ENCODE measurements at regions of chr12 and their contacts with region 1.

Region 1: DNA sequence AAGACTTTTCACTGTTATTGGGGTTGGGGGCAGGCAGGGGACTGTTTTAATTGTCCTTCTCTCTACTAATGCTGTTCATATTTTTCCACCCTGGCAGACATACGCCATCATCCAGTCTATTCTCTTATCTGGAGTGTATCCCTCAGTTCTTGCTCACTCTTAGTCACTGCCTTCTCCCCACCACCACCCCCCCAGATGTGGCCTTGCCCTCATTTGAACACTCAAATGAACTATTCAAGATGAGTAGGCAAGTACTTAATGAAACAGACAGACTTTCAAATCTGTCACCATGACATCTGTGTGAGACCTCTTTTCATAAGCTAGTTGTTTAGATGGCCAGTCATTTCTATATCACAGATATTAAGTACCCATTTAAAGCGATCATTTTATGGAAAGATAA is 10.1 kb downstream of the NUDT4 start:
- DNase-seq: no peak
- ATAC-seq: peak in 3 of 4 donors; percentile 15 to 59 (median 46)
- H3K4me3 ChIP-seq: no peak overlapping the region
- H3K27ac ChIP-seq: peak overlapping the region in 4 of 12 donors; percentile 3 to 45 (median 25)
- H3K4me1 ChIP-seq: peaks cover 0 to 80% (median 57%) of the 10 kb centered on the region in 12 donors
- H3K27me3 ChIP-seq: no peaks in the 10 kb centered on the region
- CTCF ChIP-seq: no peak
- POLR2A ChIP-seq: no peak

Region 2: DNA sequence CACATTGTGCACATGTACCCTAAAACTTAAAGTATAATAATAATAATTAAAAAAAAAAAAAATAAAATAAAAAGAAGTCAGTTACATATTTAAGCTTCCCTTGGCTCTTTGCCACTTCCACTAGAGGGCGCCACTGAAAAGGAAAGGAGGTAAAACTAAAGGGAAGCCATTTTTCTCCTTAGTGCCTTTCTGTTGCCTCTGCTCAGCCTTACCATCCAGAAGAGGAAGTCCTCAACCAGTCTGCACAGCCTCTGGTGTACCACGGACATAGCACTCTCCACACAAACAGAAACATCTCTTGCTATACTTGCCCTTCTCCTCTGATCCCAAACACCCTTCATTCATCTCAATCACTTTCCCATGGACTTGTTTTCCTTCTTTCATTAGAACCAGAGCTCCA is 289.7 kb before region 1 on chr12:
- intact Hi-C with region 1: loop called in 1 of 10 experiments (anchors 10 kb)
- DNase-seq: peak in 4 of 5 donors; percentile 33 to 50 (median 40)
- ATAC-seq: peak in 2 of 4 donors; percentile 34 to 72
- H3K4me3 ChIP-seq: no peak overlapping the region
- H3K27ac ChIP-seq: no peak overlapping the region
- H3K4me1 ChIP-seq: peaks cover 0 to 9% (median 0%) of the 10 kb centered on the region in 12 donors
- H3K27me3 ChIP-seq: no peaks in the 10 kb centered on the region
- CTCF ChIP-seq: peak; percentile 29 to 67 (median 51)
- POLR2A ChIP-seq: no peak

Region 3: GRCh38 chr12:93427779-93428563 is 40.2 kb after region 1 on chr12:
- intact Hi-C with region 1: no loop called
- DNase-seq: no peak
- ATAC-seq: peak in 1 of 4 donors; percentile 41
- H3K4me3 ChIP-seq: no peak overlapping the region
- H3K27ac ChIP-seq: peak overlapping the region in 4 of 12 donors; percentile 7 to 19 (median 12)
- H3K4me1 ChIP-seq: peaks cover 8 to 94% (median 68%) of the 10 kb centered on the region in 12 donors
- H3K27me3 ChIP-seq: no peaks in the 10 kb centered on the region
- CTCF ChIP-seq: no peak
- POLR2A ChIP-seq: no peak

Measured in heart left ventricle (tissue), 16 donors.